MCF 10A (cell line): ENCODE measurements at regions of chr5 and their contacts with region 1.

Region 1: GRCh38 chr5:119411935-119412602 is 40.2 kb upstream of the HSD17B4 start:
- DNase-seq: peak; percentile 93
- H3K4me3 Mint-ChIP-seq: peak overlapping the region; percentile 72
- H3K27ac Mint-ChIP-seq: peak overlapping the region; percentile 77
- H3K4me1 Mint-ChIP-seq: peaks cover 14% of the 10 kb centered on the region
- H3K27me3 Mint-ChIP-seq: no peaks in the 10 kb centered on the region
- CTCF ChIP-seq: peak; percentile 96

Region 2: DNA sequence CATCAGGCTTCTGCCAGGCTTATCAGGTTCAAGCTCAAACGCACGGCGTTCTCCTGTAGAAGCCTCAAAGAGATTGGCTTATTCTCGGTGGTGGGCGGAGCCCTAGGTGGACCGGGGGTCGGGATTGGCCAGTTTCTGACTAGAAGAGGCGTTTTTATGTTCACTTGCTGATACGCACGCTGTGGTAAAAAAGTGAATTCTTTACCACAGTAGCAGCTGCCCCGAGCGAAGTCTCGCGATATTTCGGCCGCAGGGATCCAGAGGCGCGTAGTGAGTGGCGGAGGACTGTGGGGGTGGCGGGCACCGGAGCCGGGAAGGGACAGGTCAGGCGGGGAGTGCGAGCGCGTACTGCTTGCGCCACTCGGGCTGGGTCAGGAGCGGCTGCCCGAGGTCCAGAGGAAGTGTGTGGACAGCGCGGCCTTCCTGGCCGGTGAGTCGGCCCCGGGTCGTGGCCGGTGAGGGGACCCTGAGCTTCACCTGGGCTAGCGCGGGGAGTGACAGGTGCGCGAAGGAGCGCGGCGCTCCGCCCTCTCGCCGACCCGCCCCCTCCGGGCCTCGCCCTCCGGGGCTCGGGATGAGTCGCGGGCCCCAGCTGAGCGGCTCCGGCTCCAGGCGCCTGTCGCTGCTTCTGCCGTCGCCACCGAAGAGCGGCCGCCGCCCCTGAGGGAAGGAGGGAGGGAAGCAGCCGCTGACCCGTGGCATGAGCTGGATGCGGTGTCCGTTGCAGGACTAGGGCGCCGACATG is 341.1 kb before region 1 on chr5 and contains the start of gene DMXL1:
- CTCF ChIA-PET with region 1: interaction called, 5 read pairs
- POLR2A ChIA-PET with region 1: interaction called, 47 read pairs
- intact Hi-C with region 1: loop called (anchors 2 kb)
- DNase-seq: peak; percentile 100
- H3K4me3 Mint-ChIP-seq: peak within 1 kb of the TSS; percentile 77
- H3K27ac Mint-ChIP-seq: peak within 1 kb of the TSS; percentile 79
- H3K4me1 Mint-ChIP-seq: peaks cover 24% of the 10 kb centered on the region
- H3K27me3 Mint-ChIP-seq: no peaks in the 10 kb centered on the region
- CTCF ChIP-seq: no peak
- total RNA-seq, gene DMXL1: 38.1 and 45.1 TPM in 2 replicates

Region 3: GRCh38 chr5:119243898-119244297 is 168.2 kb before region 1 on chr5:
- CTCF ChIA-PET with region 1: interaction called, 10 read pairs
- POLR2A ChIA-PET with region 1: interaction called, 4 read pairs
- intact Hi-C with region 1: no loop called
- DNase-seq: no peak
- H3K4me3 Mint-ChIP-seq: no peak overlapping the region
- H3K27ac Mint-ChIP-seq: peak overlapping the region; percentile 43
- H3K4me1 Mint-ChIP-seq: no peaks in the 10 kb centered on the region
- H3K27me3 Mint-ChIP-seq: no peaks in the 10 kb centered on the region
- CTCF ChIP-seq: no peak

Region 4: GRCh38 chr5:119302916-119303897 is 108.9 kb before region 1 on chr5:
- CTCF ChIA-PET with region 1: interaction called, 21 read pairs
- POLR2A ChIA-PET with region 1: interaction called, 5 read pairs
- intact Hi-C with region 1: no loop called
- DNase-seq: peak; percentile 94
- H3K4me3 Mint-ChIP-seq: peak overlapping the region; percentile 52
- H3K27ac Mint-ChIP-seq: peak overlapping the region; percentile 91
- H3K4me1 Mint-ChIP-seq: peaks cover 33% of the 10 kb centered on the region
- H3K27me3 Mint-ChIP-seq: no peaks in the 10 kb centered on the region
- CTCF ChIP-seq: no peak

Region 5: DNA sequence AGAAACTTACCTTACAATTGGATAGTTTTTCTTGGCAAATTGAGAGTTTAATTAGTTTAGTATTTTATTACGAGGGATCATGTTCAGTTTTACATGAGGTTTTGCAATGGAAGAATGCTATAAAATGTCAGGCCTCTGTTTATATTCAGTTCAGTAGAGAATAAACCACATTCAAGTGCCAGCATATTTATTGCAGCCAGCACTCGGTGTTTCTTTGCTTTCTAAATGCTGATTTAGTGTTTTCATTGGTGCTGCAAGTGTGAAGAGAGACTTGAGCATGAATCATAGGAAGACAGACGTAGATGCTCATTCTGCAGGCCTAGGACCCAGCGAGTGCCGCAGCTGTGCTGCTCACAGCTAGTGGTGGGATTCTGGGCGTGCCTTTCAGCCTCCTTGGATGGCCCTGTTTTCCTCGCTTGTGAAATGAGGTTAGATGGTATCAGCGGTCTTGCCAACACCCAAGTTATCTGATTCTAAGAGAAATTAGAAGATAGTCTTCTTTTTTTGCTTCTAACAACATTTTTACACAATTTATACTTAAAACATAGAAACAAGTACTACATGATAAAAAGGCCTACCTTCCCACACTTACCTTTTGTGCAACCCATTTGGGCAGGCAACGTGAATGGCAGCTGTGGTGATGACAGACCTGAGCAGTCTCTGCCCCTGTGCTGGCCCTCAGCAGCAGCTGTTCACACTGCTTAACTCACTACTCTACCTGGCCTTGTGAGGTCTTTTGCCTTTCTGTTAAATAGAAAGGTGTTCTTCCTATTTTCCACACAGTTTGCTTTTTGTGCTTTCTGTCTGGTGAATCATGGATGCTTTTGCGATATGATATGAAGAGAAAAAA is 83.1 kb before region 1 on chr5:
- CTCF ChIA-PET with region 1: interaction called, 253 read pairs
- POLR2A ChIA-PET with region 1: interaction called, 72 read pairs
- intact Hi-C with region 1: no loop called
- DNase-seq: peak; percentile 54
- H3K4me3 Mint-ChIP-seq: no peak overlapping the region
- H3K27ac Mint-ChIP-seq: peak overlapping the region; percentile 65
- H3K4me1 Mint-ChIP-seq: peaks cover 55% of the 10 kb centered on the region
- H3K27me3 Mint-ChIP-seq: no peaks in the 10 kb centered on the region
- CTCF ChIP-seq: no peak

Region 6: DNA sequence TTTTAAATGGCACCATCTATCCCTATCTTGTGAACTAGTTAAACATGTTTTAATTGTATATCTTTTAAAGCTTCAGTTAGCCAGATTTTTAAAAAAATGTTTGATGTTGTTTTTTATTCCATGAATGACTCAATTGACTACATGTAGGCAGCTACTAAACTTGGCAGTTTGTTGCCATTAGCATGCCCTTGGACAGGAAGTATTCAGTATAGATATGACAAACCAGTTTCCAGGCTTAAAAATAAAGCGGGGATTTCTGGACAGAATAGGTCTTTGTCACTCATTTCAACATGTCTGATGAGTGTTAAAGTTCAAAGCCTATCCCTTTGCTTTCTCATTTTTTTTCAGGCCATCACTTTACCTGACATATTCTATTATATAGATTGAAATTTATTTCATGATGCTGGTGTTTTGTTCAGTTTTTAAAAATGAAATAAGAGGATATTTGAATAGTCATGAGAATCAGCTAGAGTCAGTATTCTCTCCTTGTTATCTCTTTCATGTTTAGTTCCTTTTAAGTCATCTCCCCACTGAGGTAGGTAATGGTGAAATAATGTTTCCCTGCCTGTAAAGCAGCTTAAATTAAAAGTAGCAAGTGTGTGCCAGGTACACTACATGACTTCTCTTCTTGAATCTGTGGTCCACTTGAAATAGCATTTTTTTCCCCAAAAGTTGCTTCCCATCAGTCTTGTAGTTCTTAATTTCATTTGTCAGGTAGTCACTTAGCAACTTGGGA is 44.4 kb before region 1 on chr5:
- CTCF ChIA-PET with region 1: interaction called, 132 read pairs
- POLR2A ChIA-PET with region 1: interaction called, 174 read pairs
- intact Hi-C with region 1: no loop called
- DNase-seq: peak; percentile 81
- H3K4me3 Mint-ChIP-seq: peak overlapping the region; percentile 45
- H3K27ac Mint-ChIP-seq: peak overlapping the region; percentile 90
- H3K4me1 Mint-ChIP-seq: peaks cover 47% of the 10 kb centered on the region
- H3K27me3 Mint-ChIP-seq: no peaks in the 10 kb centered on the region
- CTCF ChIP-seq: no peak

Region 7: GRCh38 chr5:119743927-119744326 is 331.9 kb after region 1 on chr5:
- CTCF ChIA-PET with region 1: interaction called, 6 read pairs
- POLR2A ChIA-PET with region 1: no interaction called
- intact Hi-C with region 1: loop called (anchors 1 kb)
- DNase-seq: peak; percentile 89
- H3K4me3 Mint-ChIP-seq: no peak overlapping the region
- H3K27ac Mint-ChIP-seq: no peak overlapping the region
- H3K4me1 Mint-ChIP-seq: no peaks in the 10 kb centered on the region
- H3K27me3 Mint-ChIP-seq: no peaks in the 10 kb centered on the region
- CTCF ChIP-seq: peak; percentile 58